Dorsolateral prefrontal cortex (tissue), 120 donors: ENCODE measurements at regions of chr5 and their contacts with region 1.

Region 1: GRCh38 chr5:134370871-134371833 is at the start of gene UBE2B:
- DNase-seq: peak; percentile 96 to 100 (median 99)
- H3K4me3 ChIP-seq: peak within 1 kb of the TSS; percentile 60 to 100 (median 98)
- H3K27ac ChIP-seq: peak within 1 kb of the TSS; percentile 82 to 100 (median 99)
- H3K27me3 ChIP-seq: no peaks in the 10 kb centered on the region
- CTCF ChIP-seq: peak in 14 of 56 donors; percentile 2 to 35 (median 19)
- total RNA-seq, gene UBE2B: 45.5 to 171 (median 102) TPM

Region 2: GRCh38 chr5:134225618-134226440 is 145.3 kb before region 1 on chr5 and contains the start of gene PPP2CA:
- intact Hi-C with region 1: loop called (anchors 1 to 5 kb)
- DNase-seq: peak; percentile 96 to 99 (median 98)
- H3K4me3 ChIP-seq: peak within 1 kb of the TSS; percentile 76 to 100 (median 98)
- H3K27ac ChIP-seq: peak within 1 kb of the TSS; percentile 96 to 100 (median 99)
- H3K27me3 ChIP-seq: no peaks in the 10 kb centered on the region
- CTCF ChIP-seq: peak in 26 of 56 donors; percentile 2 to 41 (median 18)
- total RNA-seq, gene PPP2CA: 82.2 to 254 (median 188) TPM

Region 3: GRCh38 chr5:134411546-134412266 is 40.6 kb after region 1 on chr5 and contains the start of gene CDKN2AIPNL:
- intact Hi-C with region 1: loop called (anchors 2 kb)
- DNase-seq: peak; percentile 88 to 97 (median 92)
- H3K4me3 ChIP-seq: peak within 1 kb of the TSS; percentile 62 to 99 (median 89)
- H3K27ac ChIP-seq: peak within 1 kb of the TSS; percentile 4 to 95 (median 84)
- H3K27me3 ChIP-seq: no peaks in the 10 kb centered on the region
- CTCF ChIP-seq: peak; percentile 73 to 99 (median 94)
- total RNA-seq, gene CDKN2AIPNL: 16.6 to 49.6 (median 33.7) TPM

Region 4: GRCh38 chr5:134465816-134466240 is 94.7 kb after region 1 on chr5:
- intact Hi-C with region 1: loop called in 1 of 2 experiments (anchors 5 kb)
- DNase-seq: peak; percentile 69 to 89 (median 76)
- H3K4me3 ChIP-seq: peak overlapping the region; percentile 36 to 79 (median 66)
- H3K27ac ChIP-seq: peak overlapping the region; percentile 76 to 99 (median 96)
- H3K27me3 ChIP-seq: no peaks in the 10 kb centered on the region
- CTCF ChIP-seq: peak in 3 of 56 donors; percentile 5 to 16 (median 12)

Region 5: DNA sequence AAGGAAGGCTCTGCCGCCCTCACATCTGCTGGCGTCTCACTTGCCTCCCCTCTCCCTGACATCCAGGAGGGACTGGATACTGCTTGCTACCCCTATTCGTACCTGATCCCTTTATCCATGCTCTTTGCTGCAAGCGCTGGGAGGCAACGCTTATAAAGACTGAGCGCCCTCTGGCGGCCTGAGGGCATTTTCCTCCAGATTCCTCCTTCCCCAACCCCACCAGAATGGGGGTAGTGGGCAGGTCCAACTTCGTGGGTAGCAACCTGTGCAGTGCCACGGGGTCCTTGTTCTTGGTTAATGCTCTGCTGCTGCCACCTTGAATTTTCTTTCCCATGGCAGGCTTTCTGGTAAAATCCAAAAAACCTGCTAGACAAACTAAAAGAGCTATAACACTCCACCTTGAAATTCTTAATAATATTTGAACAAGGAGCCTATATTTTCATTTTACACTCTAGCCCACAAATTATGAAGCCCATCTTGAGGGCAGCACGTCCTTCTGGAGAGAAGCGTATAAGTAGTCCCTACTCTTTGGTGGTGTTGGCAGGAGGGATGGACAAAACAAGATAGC is 206.7 kb after region 1 on chr5:
- intact Hi-C with region 1: loop called (anchors 5 kb)
- DNase-seq: peak in 9 of 10 donors; percentile 75 to 85 (median 80)
- H3K4me3 ChIP-seq: peak overlapping the region in 1 of 59 donors; percentile 7
- H3K27ac ChIP-seq: peak overlapping the region in 10 of 59 donors; percentile 0 to 65 (median 21)
- H3K27me3 ChIP-seq: no peaks in the 10 kb centered on the region
- CTCF ChIP-seq: peak; percentile 60 to 92 (median 83)

Region 6: DNA sequence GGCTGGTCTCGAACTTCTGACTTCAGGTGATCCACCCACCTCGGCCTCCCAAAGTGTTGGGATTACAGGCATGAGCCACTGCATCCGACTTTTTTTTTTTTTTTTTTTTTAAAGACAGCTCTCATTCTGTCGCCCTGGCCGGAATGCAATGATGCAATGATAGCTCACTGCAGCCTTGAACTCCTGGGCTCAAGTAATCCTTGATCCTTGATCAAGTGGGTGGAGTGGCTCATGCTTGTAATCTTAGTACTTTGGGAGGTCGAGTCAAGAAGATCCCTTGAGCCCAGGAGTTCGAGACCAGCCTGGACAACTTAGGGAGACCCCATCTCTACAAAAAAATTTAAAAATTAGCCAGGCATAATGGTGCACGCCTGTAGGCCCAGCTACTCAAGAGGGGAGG is 285.5 kb after region 1 on chr5:
- intact Hi-C with region 1: no loop called
- DNase-seq: no peak
- H3K4me3 ChIP-seq: no peak overlapping the region
- H3K27ac ChIP-seq: no peak overlapping the region
- H3K27me3 ChIP-seq: no peaks in the 10 kb centered on the region
- CTCF ChIP-seq: no peak